Activated CD4-positive, alpha-beta T cell treated with anti-CD3 and anti-CD28 coated beads for 36 hours (primary cell): ENCODE measurements at regions of chr2 and their contacts with region 1.

Region 1: GRCh38 chr2:101655702-101656422 is 41.6 kb upstream of the MAP4K4 start:
- DNase-seq: no peak
- ATAC-seq: no peak
- H3K4me3 Mint-ChIP-seq: no peak overlapping the region
- H3K27ac Mint-ChIP-seq: no peak overlapping the region
- H3K4me1 Mint-ChIP-seq: peaks cover 22% of the 10 kb centered on the region
- H3K27me3 Mint-ChIP-seq: no peaks in the 10 kb centered on the region

Region 2: DNA sequence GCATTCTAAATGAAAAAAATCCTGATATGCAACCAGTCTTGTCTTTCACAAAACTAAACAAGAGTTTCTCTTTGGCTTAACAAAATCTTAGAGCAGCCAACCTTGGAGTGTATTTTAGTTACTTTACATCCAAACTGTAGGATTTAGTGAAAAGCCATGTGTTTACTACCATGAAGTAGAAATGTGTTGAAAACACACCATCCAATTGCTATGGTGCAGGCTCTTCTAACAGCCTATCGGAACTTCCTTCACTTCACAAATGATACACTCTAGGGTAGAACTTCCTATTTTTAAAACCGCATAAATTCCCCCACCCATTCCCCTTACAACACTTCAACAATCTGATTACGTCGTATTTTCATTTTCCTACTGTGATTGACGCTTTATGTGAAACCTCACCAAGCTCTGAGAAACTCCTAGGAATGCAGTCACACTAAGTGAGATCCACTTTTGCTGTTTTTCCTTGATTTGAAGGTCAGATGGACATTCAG is 32.8 kb before region 1 on chr2:
- CTCF ChIA-PET with region 1: no interaction called
- POLR2A ChIA-PET with region 1: no interaction called
- intact Hi-C with region 1: loop called in 1 of 2 experiments (anchors 2 kb)
- DNase-seq: no peak
- ATAC-seq: peak; percentile 67
- H3K4me3 Mint-ChIP-seq: peak overlapping the region; percentile 28
- H3K27ac Mint-ChIP-seq: peak overlapping the region; percentile 83
- H3K4me1 Mint-ChIP-seq: peaks cover 34% of the 10 kb centered on the region
- H3K27me3 Mint-ChIP-seq: no peaks in the 10 kb centered on the region

Region 3: GRCh38 chr2:101697124-101698013 is 41.5 kb after region 1 on chr2 and contains the start of gene MAP4K4:
- CTCF ChIA-PET with region 1: no interaction called
- POLR2A ChIA-PET with region 1: no interaction called
- intact Hi-C with region 1: loop called (anchors 2 to 5 kb)
- DNase-seq: peak; percentile 85
- ATAC-seq: peak; percentile 52
- H3K4me3 Mint-ChIP-seq: no peak within 1 kb of the TSS
- H3K27ac Mint-ChIP-seq: peak within 1 kb of the TSS; percentile 68
- H3K4me1 Mint-ChIP-seq: peaks cover 30% of the 10 kb centered on the region
- H3K27me3 Mint-ChIP-seq: no peaks in the 10 kb centered on the region
- total RNA-seq, gene MAP4K4: 62.3 to 70.2 TPM

Region 4: GRCh38 chr2:102698369-102699111 is 1042.7 kb after region 1 on chr2:
- CTCF ChIA-PET with region 1: no interaction called
- POLR2A ChIA-PET with region 1: no interaction called
- intact Hi-C with region 1: no loop called
- DNase-seq: no peak
- ATAC-seq: no peak
- H3K4me3 Mint-ChIP-seq: no peak overlapping the region
- H3K27ac Mint-ChIP-seq: no peak overlapping the region
- H3K4me1 Mint-ChIP-seq: no peaks in the 10 kb centered on the region
- H3K27me3 Mint-ChIP-seq: no peaks in the 10 kb centered on the region